ENCODE measurements at regions of chr2 and their contacts with region 1.

Region 1: GRCh38 chr2:200329798-200330197 is 23.3 kb downstream of the SPATS2L start:
- DNase-seq: no peak
- ATAC-seq: no peak
- H3K4me3 ChIP-seq: no peak overlapping the region
- H3K27ac ChIP-seq: 0 out of 2 replicates have a peak overlapping the region, but pooled peaks have one; percentile 30
- H3K4me1 ChIP-seq: peaks cover 26% of the 10 kb centered on the region
- H3K27me3 ChIP-seq: no peaks in the 10 kb centered on the region
- CTCF ChIP-seq: no peak

Region 2: DNA sequence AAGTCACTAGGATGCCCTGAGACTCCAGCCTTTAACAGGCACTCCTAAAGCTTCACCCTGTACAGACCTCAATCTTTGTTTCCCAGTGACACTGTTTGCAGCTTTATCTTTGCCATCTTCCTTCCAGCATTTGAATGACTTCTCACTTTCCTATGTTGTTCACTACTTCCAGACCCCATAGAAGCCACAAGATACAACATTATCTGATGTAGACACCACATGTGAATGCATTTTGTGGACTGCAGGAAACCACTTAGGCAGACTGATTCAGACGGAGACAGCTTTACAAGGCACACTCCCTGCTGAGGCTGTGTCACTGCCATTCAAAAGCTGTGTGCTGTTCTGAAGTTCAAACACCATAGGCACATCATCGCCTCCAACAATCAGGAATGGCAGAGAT is 90.6 kb before region 1 on chr2:
- CTCF ChIA-PET with region 1: no interaction called
- POLR2A ChIA-PET with region 1: interaction called, 10 read pairs
- in situ Hi-C with region 1: no loop called
- intact Hi-C with region 1: no loop called
- DNase-seq: no peak
- ATAC-seq: 0 out of 2 replicates have a peak, but pooled peaks have one; percentile 30
- H3K4me3 ChIP-seq: no peak overlapping the region
- H3K27ac ChIP-seq: no peak overlapping the region
- H3K4me1 ChIP-seq: no peaks in the 10 kb centered on the region
- H3K27me3 ChIP-seq: no peaks in the 10 kb centered on the region
- CTCF ChIP-seq: no peak

Region 3: GRCh38 chr2:200578778-200579177 is 249.0 kb after region 1 on chr2:
- CTCF ChIA-PET with region 1: no interaction called
- POLR2A ChIA-PET with region 1: no interaction called
- in situ Hi-C with region 1: no loop called
- intact Hi-C with region 1: no loop called
- DNase-seq: no peak
- ATAC-seq: peak; percentile 80; the same call in 1 of the 2 replicates
- H3K4me3 ChIP-seq: no peak overlapping the region
- H3K27ac ChIP-seq: no peak overlapping the region
- H3K4me1 ChIP-seq: no peaks in the 10 kb centered on the region
- H3K27me3 ChIP-seq: no peaks in the 10 kb centered on the region
- CTCF ChIP-seq: peak; percentile 72

Measured in Panc1 (cell line).